ENCODE measurements at regions of chr6 and their contacts with region 1.

Region 1: GRCh38 chr6:142952614-142953013 is 7.6 kb upstream of the HIVEP2 start:
- DNase-seq: peak; percentile 11
- ATAC-seq: no peak
- H3K4me3 Mint-ChIP-seq: no peak overlapping the region
- H3K27ac Mint-ChIP-seq: peak overlapping the region; percentile 19
- H3K4me1 Mint-ChIP-seq: peaks cover 31% of the 10 kb centered on the region
- H3K27me3 Mint-ChIP-seq: no peaks in the 10 kb centered on the region
- CTCF ChIP-seq: no peak

Region 2: GRCh38 chr6:142155895-142156757 is 796.5 kb before region 1 on chr6:
- CTCF ChIA-PET with region 1: no interaction called
- POLR2A ChIA-PET with region 1: no interaction called
- intact Hi-C with region 1: no loop called
- DNase-seq: no peak
- ATAC-seq: peak; percentile 53
- H3K4me3 Mint-ChIP-seq: peak overlapping the region; percentile 0
- H3K27ac Mint-ChIP-seq: no peak overlapping the region
- H3K4me1 Mint-ChIP-seq: peaks cover 53% of the 10 kb centered on the region
- H3K27me3 Mint-ChIP-seq: no peaks in the 10 kb centered on the region
- CTCF ChIP-seq: peak; percentile 62

Region 3: DNA sequence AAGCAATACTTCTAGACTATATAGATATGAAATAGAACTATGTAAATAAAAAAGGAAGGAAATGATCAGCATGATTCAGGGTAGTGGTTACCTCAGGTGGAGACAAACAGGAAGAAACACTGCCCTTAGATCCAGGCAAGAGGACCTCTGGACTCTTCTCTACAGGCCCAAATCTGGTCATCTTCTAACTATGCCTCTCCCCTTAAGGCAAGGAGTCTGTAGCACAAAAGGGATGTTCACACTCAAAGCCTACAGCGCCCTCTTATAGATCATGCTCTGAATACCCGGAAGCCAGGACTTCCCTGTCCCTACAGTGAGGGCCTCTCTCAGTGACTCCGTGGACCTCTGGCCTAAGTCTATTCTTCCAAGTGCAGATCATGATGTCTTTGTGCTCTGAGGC is 22.8 kb after region 1 on chr6:
- CTCF ChIA-PET with region 1: no interaction called
- POLR2A ChIA-PET with region 1: no interaction called
- intact Hi-C with region 1: no loop called
- DNase-seq: no peak
- ATAC-seq: no peak
- H3K4me3 Mint-ChIP-seq: no peak overlapping the region
- H3K27ac Mint-ChIP-seq: no peak overlapping the region
- H3K4me1 Mint-ChIP-seq: no peaks in the 10 kb centered on the region
- H3K27me3 Mint-ChIP-seq: no peaks in the 10 kb centered on the region
- CTCF ChIP-seq: no peak

Region 4: GRCh38 chr6:143015300-143015706 is 62.7 kb after region 1 on chr6:
- CTCF ChIA-PET with region 1: no interaction called
- POLR2A ChIA-PET with region 1: no interaction called
- intact Hi-C with region 1: loop called (anchors 10 kb)
- DNase-seq: peak; percentile 15
- ATAC-seq: peak; percentile 20
- H3K4me3 Mint-ChIP-seq: no peak overlapping the region
- H3K27ac Mint-ChIP-seq: no peak overlapping the region
- H3K4me1 Mint-ChIP-seq: peaks cover 8% of the 10 kb centered on the region
- H3K27me3 Mint-ChIP-seq: no peaks in the 10 kb centered on the region
- CTCF ChIP-seq: no peak

Measured in activated CD8-positive, alpha-beta T cell treated with anti-CD3 and anti-CD28 coated beads for 36 hours (primary cell).